AG04449 (cell line): ENCODE measurements at regions of chr4 and their contacts with region 1.

Region 1: GRCh38 chr4:77385124-77385969 is 220.3 kb upstream of the CXCL13 start:
- DNase-seq: peak; percentile 3
- H3K4me3 ChIP-seq: no peak overlapping the region
- CTCF ChIP-seq: peak; percentile 81

Region 2: DNA sequence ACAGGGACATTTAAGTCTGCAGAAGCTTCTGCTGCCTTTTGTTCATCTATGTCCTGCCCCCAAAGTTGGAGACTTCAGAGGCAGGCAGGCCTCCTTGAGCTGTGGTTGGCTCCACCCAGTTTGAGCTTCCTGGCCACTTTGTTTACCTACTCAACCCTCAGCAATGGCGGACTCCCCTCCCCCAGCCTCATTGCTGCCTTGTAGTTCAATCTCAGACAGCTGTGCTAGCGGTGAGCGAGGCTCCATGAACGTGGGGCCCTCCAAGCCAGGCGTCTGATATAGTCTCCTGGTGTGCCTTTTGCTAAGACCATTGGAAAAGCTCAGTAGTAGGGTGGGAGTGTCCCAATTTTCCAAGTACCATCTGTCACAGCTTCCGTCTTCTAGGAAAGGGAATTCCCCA is 58.2 kb before region 1 on chr4:
- CTCF ChIA-PET with region 1: no interaction called
- POLR2A ChIA-PET with region 1: no interaction called
- DNase-seq: no peak
- H3K4me3 ChIP-seq: no peak overlapping the region
- CTCF ChIP-seq: no peak

Region 3: GRCh38 chr4:77367638-77368037 is 17.7 kb before region 1 on chr4:
- CTCF ChIA-PET with region 1: interaction called, 13 read pairs
- POLR2A ChIA-PET with region 1: no interaction called
- DNase-seq: no peak
- H3K4me3 ChIP-seq: no peak overlapping the region
- CTCF ChIP-seq: no peak

Region 4: DNA sequence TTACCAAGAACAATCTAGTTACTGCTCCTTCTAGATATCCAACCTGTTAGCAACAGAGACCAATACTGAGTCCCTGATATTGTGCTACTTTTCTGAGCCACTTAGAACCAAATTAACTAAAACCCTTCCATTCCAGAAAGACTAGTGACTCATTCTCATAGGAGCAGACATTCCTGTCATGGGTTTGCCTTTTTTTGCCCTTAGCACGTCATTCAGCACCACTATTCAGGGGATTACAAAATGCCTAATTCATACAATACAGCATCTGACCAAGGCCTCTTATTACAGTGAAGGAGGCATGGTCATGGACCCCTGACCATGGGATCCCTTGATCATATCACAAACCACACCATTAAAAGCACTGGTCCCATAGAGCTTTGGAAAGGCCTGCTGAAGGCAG is 96.5 kb after region 1 on chr4:
- CTCF ChIA-PET with region 1: no interaction called
- POLR2A ChIA-PET with region 1: no interaction called
- DNase-seq: no peak
- H3K4me3 ChIP-seq: no peak overlapping the region
- CTCF ChIP-seq: no peak

Region 5: DNA sequence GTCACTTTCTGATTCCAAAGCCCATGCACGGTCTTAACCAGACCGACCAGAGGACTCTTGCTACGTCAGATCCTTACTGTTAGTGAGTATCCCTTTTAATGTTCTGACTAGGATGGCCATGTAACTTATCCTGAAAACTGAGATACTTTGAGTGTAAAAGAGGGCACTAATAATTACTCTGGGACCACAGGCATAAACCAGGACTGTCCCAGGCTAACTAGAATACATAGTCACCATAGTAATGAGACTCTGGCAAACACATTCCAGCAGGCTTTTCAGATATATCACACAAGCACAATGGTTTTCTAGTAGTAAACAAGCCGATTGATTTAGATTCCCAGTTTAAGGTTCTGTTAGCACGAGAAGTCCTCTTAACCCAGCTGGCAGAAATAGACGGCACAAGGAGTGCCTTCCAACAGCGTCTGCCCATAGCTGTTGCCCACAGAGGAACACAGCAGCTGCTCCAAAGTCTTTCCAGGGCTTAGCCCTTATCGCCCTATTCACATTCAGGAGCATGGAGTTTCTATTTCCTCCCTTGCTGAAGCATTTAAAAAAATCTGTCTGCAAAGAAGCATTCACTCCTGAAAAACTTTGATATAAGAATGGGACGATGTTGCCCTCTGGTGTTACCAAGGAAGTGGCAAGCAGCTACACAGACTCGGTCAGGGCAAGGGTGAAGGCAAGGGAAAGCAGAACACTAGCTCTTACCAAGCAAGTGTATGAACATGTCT is 312.7 kb after region 1 on chr4:
- CTCF ChIA-PET with region 1: interaction called, 35 read pairs
- POLR2A ChIA-PET with region 1: no interaction called
- DNase-seq: peak; percentile 24
- H3K4me3 ChIP-seq: no peak overlapping the region; the same call in 1 of the 2 replicates
- CTCF ChIP-seq: peak; percentile 56